ENCODE measurements at regions of chr2 and their contacts with region 1.

Region 1: GRCh38 chr2:231514103-231514950 is 15.9 kb downstream of the NMUR1 start:
- DNase-seq: peak; percentile 98
- ATAC-seq: peak; percentile 99 to 100 (median 100)
- H3K4me3 ChIP-seq: peak overlapping the region; percentile 63 to 89 (median 78)
- H3K27ac ChIP-seq: peak overlapping the region; percentile 51 to 90 (median 87)
- H3K4me1 ChIP-seq: peaks cover 0 to 23% (median 12%) of the 10 kb centered on the region in 9 donors
- H3K27me3 ChIP-seq: no peaks in the 10 kb centered on the region
- CTCF ChIP-seq: no peak

Region 2: DNA sequence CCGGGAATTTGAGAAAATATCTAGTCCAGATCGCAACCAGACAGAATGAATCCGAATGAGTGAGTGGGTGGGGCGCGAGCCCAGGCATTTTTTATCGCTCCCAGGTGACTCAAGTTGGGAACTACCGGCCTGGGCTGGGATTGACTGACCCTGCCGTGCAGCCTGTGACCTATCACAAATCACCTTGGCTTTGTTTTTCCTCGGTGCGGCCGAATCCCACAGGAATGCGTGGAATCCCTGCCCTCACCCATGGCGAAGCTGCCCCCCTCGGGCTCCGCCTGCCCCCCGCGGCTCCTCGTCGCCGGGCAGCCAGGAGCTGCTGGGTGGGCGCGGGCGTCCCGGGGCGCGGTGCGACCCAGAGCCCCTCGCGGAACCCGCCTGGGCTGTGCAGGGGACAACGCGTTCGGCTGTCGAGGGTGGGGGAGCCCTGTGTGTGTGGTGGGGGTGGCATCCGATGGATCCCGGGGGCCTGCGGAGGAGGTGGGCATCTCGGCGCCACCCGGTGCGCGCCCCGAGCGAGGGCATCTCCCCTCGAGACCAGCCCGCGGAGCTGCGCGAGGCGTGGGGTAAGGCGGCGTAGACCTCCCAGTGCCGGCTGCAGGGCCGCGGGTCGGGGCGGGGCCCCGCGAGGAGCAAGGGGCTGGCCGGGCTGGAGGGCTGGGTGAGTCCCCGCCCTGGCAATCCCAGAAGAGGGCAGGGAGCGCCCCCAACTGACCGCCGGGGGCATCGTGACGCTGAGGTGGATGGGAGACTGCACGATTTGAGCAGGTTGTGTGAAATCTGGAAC is 102.3 kb before region 1 on chr2:
- intact Hi-C with region 1: no loop called
- DNase-seq: peak; percentile 76 to 85
- ATAC-seq: peak; percentile 96 to 100 (median 98)
- H3K4me3 ChIP-seq: peak overlapping the region; percentile 46 to 76 (median 61)
- H3K27ac ChIP-seq: peak overlapping the region in 3 of 10 donors; percentile 35 to 53 (median 40)
- H3K4me1 ChIP-seq: peaks cover 0 to 14% (median 12%) of the 10 kb centered on the region in 9 donors
- H3K27me3 ChIP-seq: peaks cover 0 to 43% (median 17%) of the 10 kb centered on the region in 7 donors
- CTCF ChIP-seq: peak; percentile 65 to 94 (median 90)

Region 3: GRCh38 chr2:231482806-231483391 is 31.4 kb before region 1 on chr2:
- intact Hi-C with region 1: no loop called
- DNase-seq: peak; percentile 72 to 82
- ATAC-seq: peak; percentile 90 to 94 (median 92)
- H3K4me3 ChIP-seq: peak overlapping the region; percentile 36 to 76 (median 62)
- H3K27ac ChIP-seq: peak overlapping the region; percentile 30 to 93 (median 88)
- H3K4me1 ChIP-seq: peaks cover 0 to 14% (median 6%) of the 10 kb centered on the region in 9 donors
- H3K27me3 ChIP-seq: no peaks in the 10 kb centered on the region
- CTCF ChIP-seq: peak; percentile 85 to 97 (median 91)

Region 4: DNA sequence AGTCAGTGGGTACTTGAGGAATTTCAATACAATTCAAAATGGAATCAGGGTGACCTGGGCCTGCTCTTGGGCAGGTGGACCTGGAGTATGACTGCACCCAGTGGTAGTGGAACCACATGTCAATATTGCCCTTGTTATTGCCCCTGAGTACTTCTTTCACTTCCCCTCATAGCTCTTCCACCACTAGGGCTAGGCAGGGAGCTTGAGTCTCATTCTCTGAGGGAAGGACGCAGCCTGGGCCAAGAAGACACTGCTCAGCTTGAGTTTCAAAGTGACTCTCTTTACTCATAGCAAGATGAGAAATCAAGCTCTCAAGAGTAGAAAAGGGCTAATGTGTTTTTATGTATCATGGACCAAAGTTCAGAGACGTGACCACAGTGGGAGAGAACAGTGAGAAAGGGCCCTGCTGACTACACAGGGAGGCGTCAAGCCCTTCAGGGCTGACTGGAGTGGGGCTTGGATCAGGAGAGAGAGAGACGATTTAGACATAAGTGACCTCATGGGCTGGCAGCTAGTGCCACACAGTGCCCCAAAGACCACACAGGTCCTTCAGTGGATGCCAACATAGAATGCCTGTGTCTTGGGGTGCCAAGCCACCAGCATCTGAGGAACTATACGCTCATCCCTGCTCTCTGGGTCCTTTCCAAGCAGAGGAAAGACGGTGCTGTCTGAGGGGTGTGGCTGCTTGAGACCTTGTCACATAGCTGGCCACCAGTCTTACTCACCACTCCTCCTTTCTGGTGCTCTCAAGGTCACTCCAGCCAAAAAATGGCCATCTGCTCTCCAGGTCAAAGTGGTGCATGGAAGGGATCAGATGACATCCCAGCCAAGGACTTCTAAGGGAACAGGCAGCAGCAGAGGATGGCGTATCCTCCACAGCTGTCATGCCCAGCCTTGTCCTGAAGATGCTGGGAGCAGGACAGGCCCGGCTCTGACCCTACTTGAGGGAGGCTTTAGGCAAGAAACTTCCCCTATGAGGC is 206.9 kb after region 1 on chr2:
- intact Hi-C with region 1: loop called in 2 of 10 experiments (anchors 10 kb)
- DNase-seq: no peak
- ATAC-seq: no peak
- H3K4me3 ChIP-seq: no peak overlapping the region
- H3K27ac ChIP-seq: no peak overlapping the region
- H3K4me1 ChIP-seq: peaks cover 0 to 18% (median 11%) of the 10 kb centered on the region in 9 donors
- H3K27me3 ChIP-seq: no peaks in the 10 kb centered on the region
- CTCF ChIP-seq: no peak